Right lobe of liver (tissue), 6 donors: ENCODE measurements at regions of chr3 and their contacts with region 1.

Region 1: GRCh38 chr3:136249593-136250225 is 431 bp upstream of the PCCB start:
- DNase-seq: no peak
- ATAC-seq: no peak
- H3K4me3 ChIP-seq: peak overlapping the region; percentile 74 to 83 (median 77)
- H3K27ac ChIP-seq: peak overlapping the region; percentile 87 to 95 (median 94)
- H3K4me1 ChIP-seq: peaks cover 0 to 23% (median 14%) of the 10 kb centered on the region in 4 donors
- H3K27me3 ChIP-seq: no peaks in the 10 kb centered on the region
- CTCF ChIP-seq: no peak
- POLR2A ChIP-seq: no peak

Region 2: DNA sequence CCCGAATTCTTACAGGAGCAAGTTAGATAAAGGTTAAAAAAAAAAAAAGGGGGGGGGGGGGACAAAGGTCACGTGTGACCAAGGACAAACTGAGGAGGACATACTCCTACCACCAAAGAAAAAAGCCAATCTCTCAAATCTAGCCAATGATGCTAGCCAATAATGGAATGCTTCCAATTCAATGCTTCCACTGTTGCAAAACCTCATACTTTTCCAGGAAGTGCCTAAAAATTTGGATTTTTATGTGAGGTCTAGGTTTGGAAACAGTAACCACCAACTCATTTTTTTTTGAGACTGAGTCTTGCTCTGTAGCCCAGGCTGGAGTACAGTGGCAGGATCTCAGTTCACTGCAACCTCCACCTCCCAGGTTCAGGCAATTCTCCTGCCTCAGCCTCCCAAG is 65.0 kb before region 1 on chr3:
- intact Hi-C with region 1: no loop called
- DNase-seq: no peak
- ATAC-seq: peak; percentile 69 to 83 (median 80)
- H3K4me3 ChIP-seq: no peak overlapping the region
- H3K27ac ChIP-seq: peak overlapping the region in 2 of 3 donors; percentile 10 to 29
- H3K4me1 ChIP-seq: peaks cover 0 to 44% (median 14%) of the 10 kb centered on the region in 4 donors
- H3K27me3 ChIP-seq: no peaks in the 10 kb centered on the region
- CTCF ChIP-seq: no peak
- POLR2A ChIP-seq: no peak

Region 3: GRCh38 chr3:136196401-136197158 is 53.1 kb before region 1 on chr3:
- intact Hi-C with region 1: loop called in 1 of 2 experiments (anchors 10 kb)
- DNase-seq: peak; percentile 99 to 100 (median 99)
- ATAC-seq: peak; percentile 78 to 88 (median 83)
- H3K4me3 ChIP-seq: peak overlapping the region; percentile 81 to 96 (median 82)
- H3K27ac ChIP-seq: peak overlapping the region; percentile 99 to 100 (median 99)
- H3K4me1 ChIP-seq: peaks cover 0 to 27% (median 12%) of the 10 kb centered on the region in 4 donors
- H3K27me3 ChIP-seq: no peaks in the 10 kb centered on the region
- CTCF ChIP-seq: no peak
- POLR2A ChIP-seq: peak; percentile 92